ENCODE measurements at regions of chr7 and their contacts with region 1.

Region 1: DNA sequence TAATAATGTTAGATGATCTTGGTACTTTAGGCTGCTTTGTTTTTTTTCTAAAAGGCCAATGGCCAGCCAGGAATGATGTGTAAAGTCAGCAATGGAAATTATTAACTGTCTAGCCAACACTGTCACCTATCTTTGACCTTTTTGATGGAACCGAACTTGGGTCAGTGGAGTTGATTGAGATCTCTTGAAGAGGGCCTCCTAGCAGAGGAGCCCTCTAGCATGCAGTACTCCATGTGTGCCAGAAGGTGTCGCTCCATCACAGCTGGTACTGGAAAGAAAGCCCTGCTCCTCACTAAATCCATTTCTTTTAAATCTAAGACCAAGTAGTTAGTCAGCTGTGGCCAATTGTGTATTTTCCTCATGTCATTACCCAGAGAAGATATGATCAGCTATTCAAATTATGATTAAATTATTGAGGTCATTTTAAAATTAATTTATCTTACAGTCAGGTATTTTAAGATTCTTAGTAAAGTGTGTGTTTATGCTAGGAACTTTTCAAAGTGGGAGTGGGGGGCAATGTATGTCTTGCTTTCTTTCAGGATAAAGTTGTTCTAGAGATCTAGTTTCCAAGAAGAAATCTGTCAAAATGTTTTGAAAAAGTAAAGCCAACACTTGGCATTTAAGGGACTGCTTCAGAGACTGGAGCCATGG is 33.1 kb upstream of the CROT start:
- DNase-seq: peak; percentile 71
- ATAC-seq: peak; percentile 85
- H3K4me3 ChIP-seq: no peak overlapping the region
- H3K27ac ChIP-seq: no peak overlapping the region
- H3K4me1 ChIP-seq: peaks cover 7% of the 10 kb centered on the region
- H3K27me3 ChIP-seq: no peaks in the 10 kb centered on the region
- CTCF ChIP-seq: peak; percentile 99
- POLR2A ChIP-seq: peak; percentile 30; the same call in 1 of the 2 replicates
- RAD21 ChIP-seq: peak; percentile 100

Region 2: GRCh38 chr7:87252166-87252565 is 60.2 kb before region 1 on chr7:
- CTCF ChIA-PET with region 1: no interaction called
- POLR2A ChIA-PET with region 1: no interaction called
- dilution Hi-C with region 1: no loop called
- in situ Hi-C with region 1: no loop called
- intact Hi-C with region 1: no loop called
- DNase-seq: no peak
- ATAC-seq: no peak
- H3K4me3 ChIP-seq: no peak overlapping the region
- H3K27ac ChIP-seq: no peak overlapping the region
- H3K4me1 ChIP-seq: no peaks in the 10 kb centered on the region
- H3K27me3 ChIP-seq: no peaks in the 10 kb centered on the region; the same call in 1 of the 2 replicates
- CTCF ChIP-seq: no peak
- POLR2A ChIP-seq: no peak
- RAD21 ChIP-seq: no peak

Region 3: DNA sequence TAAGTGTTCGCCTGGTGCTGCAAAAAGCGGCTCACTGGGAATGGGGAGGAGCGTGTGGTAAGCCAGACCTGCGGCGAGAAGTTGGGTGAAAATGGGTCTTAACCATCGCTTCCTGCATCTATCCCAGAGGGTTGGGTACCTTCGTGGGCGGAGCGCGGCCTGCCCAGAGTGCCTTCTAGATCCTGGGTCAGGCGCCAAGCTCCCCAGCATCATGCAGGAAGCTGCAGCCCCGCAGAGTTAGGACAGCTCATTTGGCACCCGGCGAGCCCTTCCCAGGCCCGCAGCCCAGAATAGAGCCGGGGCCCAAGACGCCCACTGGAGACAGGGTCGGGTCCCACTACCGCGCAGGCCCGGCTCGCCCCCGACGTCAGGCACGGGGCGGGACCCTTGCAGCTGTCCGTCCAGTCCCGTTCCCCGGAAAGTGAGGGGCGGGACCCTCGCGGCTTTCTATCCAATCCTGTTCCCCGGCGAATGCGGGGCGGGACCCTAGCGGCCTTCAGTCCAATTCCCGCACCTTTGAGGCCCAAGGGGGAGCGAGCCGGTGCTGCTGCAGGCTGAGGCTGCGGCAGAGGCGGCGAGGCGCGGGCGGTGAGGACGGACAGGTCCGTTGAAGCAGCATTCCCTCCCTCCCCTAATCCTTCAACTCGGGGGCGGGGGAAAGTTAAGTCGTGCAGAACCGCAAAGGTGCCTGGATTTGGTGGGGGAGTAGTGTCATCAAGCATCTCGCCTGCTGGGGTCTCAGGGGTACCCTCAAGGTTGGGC is 33.0 kb after region 1 on chr7 and contains the start of gene CROT:
- CTCF ChIA-PET with region 1: interaction called, 3 read pairs
- POLR2A ChIA-PET with region 1: interaction called, 4 read pairs
- dilution Hi-C with region 1: no loop called
- in situ Hi-C with region 1: no loop called
- intact Hi-C with region 1: loop called (anchors 1 kb)
- DNase-seq: peak; percentile 91
- ATAC-seq: peak; percentile 99
- H3K4me3 ChIP-seq: peak within 1 kb of the TSS; percentile 68
- H3K27ac ChIP-seq: peak within 1 kb of the TSS; percentile 88
- H3K4me1 ChIP-seq: peaks cover 3% of the 10 kb centered on the region
- H3K27me3 ChIP-seq: no peaks in the 10 kb centered on the region
- CTCF ChIP-seq: no peak
- POLR2A ChIP-seq: no peak
- RAD21 ChIP-seq: no peak
- total RNA-seq, gene CROT: 7.5 and 14.4 TPM in 2 replicates

Region 4: GRCh38 chr7:87416682-87417587 is 104.6 kb after region 1 on chr7:
- CTCF ChIA-PET with region 1: interaction called, 60 read pairs
- POLR2A ChIA-PET with region 1: interaction called, 15 read pairs
- dilution Hi-C with region 1: no loop called
- in situ Hi-C with region 1: loop called (anchors 5 kb)
- intact Hi-C with region 1: loop called (anchors 1 kb)
- DNase-seq: peak; percentile 69
- ATAC-seq: peak; percentile 22; the same call in 1 of the 2 replicates
- H3K4me3 ChIP-seq: no peak overlapping the region
- H3K27ac ChIP-seq: no peak overlapping the region
- H3K4me1 ChIP-seq: peaks cover 12% of the 10 kb centered on the region
- H3K27me3 ChIP-seq: peaks cover 2% of the 10 kb centered on the region; the same call in 1 of the 2 replicates
- CTCF ChIP-seq: peak; percentile 85
- POLR2A ChIP-seq: no peak
- RAD21 ChIP-seq: peak; percentile 89

Region 5: GRCh38 chr7:87574630-87575029 is 262.3 kb after region 1 on chr7:
- CTCF ChIA-PET with region 1: no interaction called
- POLR2A ChIA-PET with region 1: no interaction called
- dilution Hi-C with region 1: no loop called
- in situ Hi-C with region 1: no loop called
- intact Hi-C with region 1: loop called (anchors 10 kb)
- DNase-seq: peak; percentile 86
- ATAC-seq: peak; percentile 52
- H3K4me3 ChIP-seq: no peak overlapping the region
- H3K27ac ChIP-seq: no peak overlapping the region
- H3K4me1 ChIP-seq: peaks cover 3% of the 10 kb centered on the region; the same call in 1 of the 2 replicates
- H3K27me3 ChIP-seq: no peaks in the 10 kb centered on the region
- CTCF ChIP-seq: no peak
- POLR2A ChIP-seq: no peak
- RAD21 ChIP-seq: no peak

Region 6: GRCh38 chr7:87876040-87876868 is 563.9 kb after region 1 on chr7 and contains the starts of genes DBF4 and SLC25A40:
- CTCF ChIA-PET with region 1: no interaction called
- POLR2A ChIA-PET with region 1: no interaction called
- dilution Hi-C with region 1: no loop called
- in situ Hi-C with region 1: loop called (anchors 10 kb)
- intact Hi-C with region 1: loop called (anchors 5 kb)
- DNase-seq: peak; percentile 89
- ATAC-seq: peak; percentile 95
- H3K4me3 ChIP-seq: peak within 1 kb of the TSS; percentile 61
- H3K27ac ChIP-seq: peak within 1 kb of the TSS; percentile 39
- H3K4me1 ChIP-seq: no peaks in the 10 kb centered on the region
- H3K27me3 ChIP-seq: no peaks in the 10 kb centered on the region
- CTCF ChIP-seq: no peak
- POLR2A ChIP-seq: peak; percentile 86
- RAD21 ChIP-seq: no peak
- total RNA-seq, gene DBF4: 7.2 and 20.3 TPM in 2 replicates
- total RNA-seq, gene SLC25A40: 4.7 and 8.6 TPM in 2 replicates

Region 7: GRCh38 chr7:88111136-88111743 is 798.9 kb after region 1 on chr7:
- CTCF ChIA-PET with region 1: no interaction called
- POLR2A ChIA-PET with region 1: no interaction called
- dilution Hi-C with region 1: no loop called
- in situ Hi-C with region 1: no loop called
- intact Hi-C with region 1: loop called (anchors 5 kb)
- DNase-seq: peak; percentile 41
- ATAC-seq: peak; percentile 46
- H3K4me3 ChIP-seq: no peak overlapping the region
- H3K27ac ChIP-seq: no peak overlapping the region
- H3K4me1 ChIP-seq: no peaks in the 10 kb centered on the region
- H3K27me3 ChIP-seq: no peaks in the 10 kb centered on the region
- CTCF ChIP-seq: peak; percentile 58
- POLR2A ChIP-seq: no peak
- RAD21 ChIP-seq: peak; percentile 56

Measured in IMR-90 (cell line).